AG04449 (cell line): ENCODE measurements at regions of chr1 and their contacts with region 1.

Region 1: GRCh38 chr1:186985889-186986491 is 157.2 kb downstream of the PLA2G4A start:
- DNase-seq: no peak
- H3K4me3 ChIP-seq: no peak overlapping the region
- CTCF ChIP-seq: peak; percentile 58

Region 2: DNA sequence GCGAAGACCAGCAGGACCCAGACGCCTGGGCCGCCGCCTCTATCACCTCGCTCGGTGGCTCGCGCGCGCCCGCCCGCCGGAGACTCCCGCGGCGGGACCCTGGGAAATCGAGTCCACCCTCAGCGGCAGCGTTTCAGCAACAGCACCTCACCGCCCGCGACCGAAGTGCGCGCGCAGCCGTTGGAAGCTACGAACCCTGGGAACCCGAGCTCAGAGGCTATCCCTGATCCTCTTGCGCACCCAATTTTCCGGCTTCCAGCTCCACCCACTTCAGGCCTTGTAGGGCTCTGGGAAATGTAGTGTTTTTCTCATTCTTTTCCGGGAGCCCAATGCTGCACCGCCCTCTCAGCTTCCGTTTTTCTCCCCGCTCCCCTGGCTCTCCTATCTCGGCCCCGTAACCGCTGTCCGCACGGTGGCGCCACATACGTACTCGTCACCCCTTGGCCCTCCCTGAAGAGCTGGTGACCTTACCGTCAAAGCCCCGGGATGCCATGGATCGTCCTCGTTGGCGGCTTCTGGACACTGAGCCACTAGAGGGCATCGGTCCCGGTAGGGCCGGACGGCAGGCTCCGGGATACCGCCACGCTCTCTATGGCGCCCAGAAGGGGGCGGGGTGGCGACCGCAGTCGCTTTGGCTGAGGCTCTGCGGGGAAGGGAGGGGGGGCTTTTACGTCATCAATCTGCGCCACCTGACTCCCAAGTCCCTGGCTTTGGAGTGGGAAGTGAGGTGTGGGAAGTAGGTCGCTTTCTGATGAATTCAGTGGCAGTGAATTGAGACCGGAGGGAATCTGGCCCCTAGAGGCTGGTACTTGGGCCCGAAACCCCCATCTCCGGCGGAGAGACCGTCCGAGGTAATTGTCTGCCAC is 610.7 kb before region 1 on chr1 and contains the starts of genes ODR4 and TPR:
- CTCF ChIA-PET with region 1: interaction called, 15 read pairs
- POLR2A ChIA-PET with region 1: no interaction called
- DNase-seq: peak; percentile 98
- H3K4me3 ChIP-seq: peak within 1 kb of the TSS; percentile 84
- CTCF ChIP-seq: peak; percentile 86

Region 3: DNA sequence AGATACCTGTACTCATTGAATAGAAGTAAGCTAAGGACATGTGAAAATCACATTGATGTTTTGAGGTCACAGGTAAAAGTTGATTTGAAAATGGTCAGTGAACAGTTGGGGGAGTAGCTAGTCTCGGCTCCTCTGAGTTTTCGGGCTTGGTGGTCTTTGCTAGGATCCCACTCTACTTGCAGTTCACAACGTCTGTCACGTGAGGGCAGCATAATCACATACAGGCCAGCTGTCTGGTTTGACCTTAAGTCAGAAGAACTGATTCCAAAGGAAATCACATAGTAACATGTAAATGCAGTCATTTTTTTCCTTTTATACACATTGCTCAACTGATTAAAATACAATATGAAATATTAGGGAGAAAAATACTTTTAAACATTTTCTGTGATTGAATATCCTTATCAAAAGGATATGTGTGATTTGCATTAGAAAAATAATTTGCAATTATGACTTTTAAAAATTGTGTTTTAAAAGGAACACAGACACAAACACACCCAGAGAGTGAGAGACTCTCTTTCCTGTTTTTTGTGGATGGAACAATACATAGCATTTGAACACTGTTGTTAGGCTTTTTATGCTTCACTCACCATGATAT is 503.2 kb before region 1 on chr1:
- CTCF ChIA-PET with region 1: interaction called, 19 read pairs
- POLR2A ChIA-PET with region 1: no interaction called
- DNase-seq: no peak
- H3K4me3 ChIP-seq: no peak overlapping the region
- CTCF ChIP-seq: peak; percentile 87

Region 4: DNA sequence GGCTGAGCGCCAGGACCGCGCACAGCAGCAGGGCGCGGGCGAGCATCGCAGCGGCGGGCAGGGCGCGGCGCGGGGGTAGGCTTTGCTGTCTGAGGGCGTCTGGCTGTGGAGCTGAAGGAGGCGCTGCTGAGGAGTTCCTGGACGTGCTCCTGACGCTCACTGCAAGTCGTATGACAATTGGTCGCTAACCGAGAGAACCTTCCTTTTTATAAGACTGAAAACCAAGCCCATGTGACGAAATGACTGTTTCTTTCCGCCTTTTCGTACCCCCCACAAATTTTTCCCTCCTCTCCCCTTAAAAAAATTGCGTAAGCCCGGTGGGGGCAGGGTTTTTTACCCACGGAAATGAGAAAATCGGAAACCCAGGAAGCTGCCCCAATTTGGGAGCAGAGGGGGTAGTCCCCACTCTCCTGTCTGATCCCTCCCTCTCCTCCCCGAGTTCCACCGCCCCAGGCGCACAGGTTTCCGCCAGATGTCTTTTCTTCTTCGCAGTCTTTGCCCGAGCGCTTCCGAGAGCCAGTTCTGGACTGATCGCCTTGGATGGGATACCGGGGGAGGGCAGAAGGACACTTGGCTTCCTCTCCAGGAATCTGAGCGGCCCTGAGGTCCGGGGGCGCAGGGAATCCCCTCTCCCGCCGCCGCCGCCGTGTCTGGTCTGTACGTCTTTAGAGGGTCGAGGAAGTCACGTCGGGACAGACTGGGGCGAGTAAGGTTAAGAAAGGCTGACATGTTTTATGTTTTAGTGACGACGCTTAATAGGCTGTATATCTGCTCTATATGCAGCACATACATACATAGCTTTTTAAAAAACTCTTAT is 305.5 kb before region 1 on chr1 and contains the start of gene PTGS2:
- CTCF ChIA-PET with region 1: interaction called, 12 read pairs
- POLR2A ChIA-PET with region 1: no interaction called
- DNase-seq: peak; percentile 85
- H3K4me3 ChIP-seq: peak within 1 kb of the TSS; percentile 80
- CTCF ChIP-seq: peak; percentile 86

Region 5: GRCh38 chr1:186915555-186915954 is 70.4 kb before region 1 on chr1:
- CTCF ChIA-PET with region 1: interaction called, 37 read pairs
- POLR2A ChIA-PET with region 1: no interaction called
- DNase-seq: no peak
- H3K4me3 ChIP-seq: no peak overlapping the region
- CTCF ChIP-seq: no peak

Region 6: GRCh38 chr1:187027253-187027652 is 41.3 kb after region 1 on chr1:
- CTCF ChIA-PET with region 1: no interaction called
- POLR2A ChIA-PET with region 1: no interaction called
- DNase-seq: no peak
- H3K4me3 ChIP-seq: no peak overlapping the region
- CTCF ChIP-seq: no peak

Region 7: GRCh38 chr1:187038789-187039188 is 52.8 kb after region 1 on chr1:
- CTCF ChIA-PET with region 1: no interaction called
- POLR2A ChIA-PET with region 1: no interaction called
- DNase-seq: no peak
- H3K4me3 ChIP-seq: no peak overlapping the region
- CTCF ChIP-seq: no peak

Region 8: GRCh38 chr1:187306710-187307415 is 320.9 kb after region 1 on chr1:
- CTCF ChIA-PET with region 1: no interaction called
- POLR2A ChIA-PET with region 1: no interaction called
- DNase-seq: no peak
- H3K4me3 ChIP-seq: no peak overlapping the region
- CTCF ChIP-seq: no peak